ENCODE measurements at regions of chr13 and their contacts with region 1.

Region 1: GRCh38 chr13:100674848-100675660 is 459 bp upstream of the TMTC4 start:
- DNase-seq: peak; percentile 95 to 96 (median 96)
- H3K4me3 ChIP-seq: peak overlapping the region; percentile 76 to 94 (median 83)
- H3K4me3 Mint-ChIP-seq: peak overlapping the region; percentile 94 to 95
- H3K27ac ChIP-seq: peak overlapping the region in 1 of 2 donors; percentile 68
- H3K27ac Mint-ChIP-seq: peak overlapping the region in 5 of 7 donors; percentile 26 to 84 (median 35)
- H3K4me1 ChIP-seq: peaks cover 19 to 22% of the 10 kb centered on the region in 2 donors
- H3K4me1 Mint-ChIP-seq: peaks cover 30% of the 10 kb centered on the region
- H3K27me3 ChIP-seq: peaks cover 6 to 12% of the 10 kb centered on the region in 2 donors
- H3K27me3 Mint-ChIP-seq: peaks cover 7 to 19% (median 16%) of the 10 kb centered on the region in 3 donors
- CTCF ChIP-seq: peak; percentile 19

Region 2: DNA sequence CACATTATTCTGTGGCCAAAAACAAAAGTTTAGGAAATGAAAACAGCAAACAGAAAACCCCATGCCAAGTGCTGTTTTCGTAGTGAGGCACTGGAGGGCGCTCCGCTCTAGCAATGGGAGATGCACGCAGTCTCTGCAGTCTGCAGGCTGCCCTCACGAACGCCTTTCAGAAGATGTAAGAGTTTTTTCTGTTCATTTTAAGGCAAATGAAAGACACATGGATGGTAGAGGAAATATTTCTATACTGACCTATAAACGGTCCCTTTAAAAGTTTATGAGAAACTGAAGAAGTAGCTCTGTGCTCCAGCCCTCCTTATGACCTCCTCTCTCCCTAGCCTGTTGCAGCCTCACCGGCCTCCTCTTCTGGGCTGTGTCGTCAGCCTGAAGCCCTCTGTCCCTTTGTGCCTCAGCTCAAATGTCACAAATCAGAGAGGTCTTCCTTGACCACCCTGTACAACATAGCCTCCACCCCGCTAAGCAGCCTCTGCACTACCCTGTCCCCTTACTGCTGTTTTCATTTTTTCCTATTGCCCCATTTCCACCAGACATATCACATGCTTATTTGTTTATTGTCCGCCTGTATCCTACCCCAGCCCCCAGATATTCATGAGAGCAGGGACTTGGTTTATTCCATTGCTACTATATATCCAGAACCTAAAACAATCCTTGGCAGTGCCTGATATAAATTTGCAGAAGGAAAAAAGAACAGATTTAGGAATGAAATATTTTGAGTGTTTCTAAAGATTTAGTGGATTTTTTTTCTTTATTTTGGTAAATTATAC is 1057.4 kb before region 1 on chr13:
- intact Hi-C with region 1: loop called in 1 of 2 experiments (anchors 10 kb)
- DNase-seq: peak in 1 of 3 donors; percentile 5
- H3K4me3 ChIP-seq: no peak overlapping the region
- H3K4me3 Mint-ChIP-seq: no peak overlapping the region
- H3K27ac ChIP-seq: no peak overlapping the region
- H3K27ac Mint-ChIP-seq: peak overlapping the region in 1 of 7 donors; percentile 60
- H3K4me1 ChIP-seq: no peaks in the 10 kb centered on the region
- H3K4me1 Mint-ChIP-seq: peaks cover 4% of the 10 kb centered on the region
- H3K27me3 ChIP-seq: no peaks in the 10 kb centered on the region
- H3K27me3 Mint-ChIP-seq: peaks cover 0 to 8% (median 3%) of the 10 kb centered on the region in 3 donors
- CTCF ChIP-seq: peak; percentile 42

Measured in CD14-positive monocyte (primary cell).